Cardiac septum (tissue), 1 donor: ENCODE measurements at regions of chr22 and their contacts with region 1.

Region 1: GRCh38 chr22:20981787-20982562 is at the start of gene LZTR1:
- DNase-seq: peak; percentile 95
- total RNA-seq, gene LZTR1: 33.0 TPM

Region 2: GRCh38 chr22:20840646-20841371 is 141.2 kb before region 1 on chr22:
- intact Hi-C with region 1: no loop called
- DNase-seq: no peak

Region 3: GRCh38 chr22:20916983-20917810 is 64.8 kb before region 1 on chr22 and contains the start of gene CRKL:
- intact Hi-C with region 1: loop called (anchors 1 kb)
- DNase-seq: peak; percentile 99
- total RNA-seq, gene CRKL: 55.5 TPM